ENCODE measurements at regions of chr3 and their contacts with region 1.

Region 1: GRCh38 chr3:197942956-197943556 is 6.9 kb upstream of the RPL35A start:
- DNase-seq: peak; percentile 45
- H3K4me3 Mint-ChIP-seq: no peak overlapping the region
- H3K27ac Mint-ChIP-seq: no peak overlapping the region
- H3K4me1 Mint-ChIP-seq: no peaks in the 10 kb centered on the region
- H3K27me3 Mint-ChIP-seq: no peaks in the 10 kb centered on the region
- CTCF ChIP-seq: peak; percentile 59

Region 2: DNA sequence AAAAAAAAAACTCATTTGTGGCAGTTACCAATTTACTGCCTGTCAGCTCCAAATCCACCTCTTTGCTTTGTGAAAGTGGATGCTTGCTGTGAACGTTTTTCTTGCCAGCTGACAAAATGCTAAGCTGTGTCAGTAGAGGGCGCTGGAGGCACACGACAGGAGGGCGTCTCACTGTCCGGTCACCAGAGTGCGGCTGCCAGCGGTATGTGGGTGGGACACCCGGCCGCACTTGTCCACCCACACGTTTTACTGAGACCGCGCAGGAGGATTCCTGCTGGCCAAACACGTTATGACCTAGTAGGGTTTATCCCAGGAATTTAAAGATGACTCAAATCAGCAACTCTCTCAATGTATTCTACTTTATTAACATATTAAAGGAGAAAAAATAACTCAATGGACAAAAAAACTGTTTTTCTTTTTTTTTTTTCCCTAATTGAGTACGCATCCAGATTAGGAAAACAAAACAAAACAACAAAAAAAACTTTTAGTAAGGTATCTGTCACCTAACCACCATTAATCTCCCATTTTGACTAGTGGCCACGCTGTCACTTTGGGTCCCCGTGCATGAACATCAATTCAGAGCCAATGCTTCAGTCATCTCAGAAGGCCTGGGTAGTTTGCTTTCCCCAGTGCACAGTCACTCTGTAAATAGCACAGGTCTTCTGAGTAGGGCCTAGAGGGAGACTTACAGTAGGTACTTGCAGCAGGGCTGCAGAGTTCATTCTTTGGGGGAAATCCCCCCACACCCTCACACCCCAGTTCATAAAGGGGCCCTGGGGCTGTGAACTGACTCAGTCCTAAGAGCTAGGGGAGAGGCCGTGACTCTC is 36.8 kb before region 1 on chr3:
- CTCF ChIA-PET with region 1: interaction called, 31 read pairs
- POLR2A ChIA-PET with region 1: no interaction called
- intact Hi-C with region 1: loop called (anchors 1 kb)
- DNase-seq: peak; percentile 88
- H3K4me3 Mint-ChIP-seq: no peak overlapping the region
- H3K27ac Mint-ChIP-seq: peak overlapping the region; percentile 53
- H3K4me1 Mint-ChIP-seq: no peaks in the 10 kb centered on the region
- H3K27me3 Mint-ChIP-seq: no peaks in the 10 kb centered on the region
- CTCF ChIP-seq: peak; percentile 89

Region 3: GRCh38 chr3:197912770-197913476 is 30.1 kb before region 1 on chr3:
- CTCF ChIA-PET with region 1: interaction called, 10 read pairs
- POLR2A ChIA-PET with region 1: no interaction called
- intact Hi-C with region 1: no loop called
- DNase-seq: no peak
- H3K4me3 Mint-ChIP-seq: no peak overlapping the region
- H3K27ac Mint-ChIP-seq: no peak overlapping the region
- H3K4me1 Mint-ChIP-seq: no peaks in the 10 kb centered on the region
- H3K27me3 Mint-ChIP-seq: no peaks in the 10 kb centered on the region
- CTCF ChIP-seq: no peak

Region 4: DNA sequence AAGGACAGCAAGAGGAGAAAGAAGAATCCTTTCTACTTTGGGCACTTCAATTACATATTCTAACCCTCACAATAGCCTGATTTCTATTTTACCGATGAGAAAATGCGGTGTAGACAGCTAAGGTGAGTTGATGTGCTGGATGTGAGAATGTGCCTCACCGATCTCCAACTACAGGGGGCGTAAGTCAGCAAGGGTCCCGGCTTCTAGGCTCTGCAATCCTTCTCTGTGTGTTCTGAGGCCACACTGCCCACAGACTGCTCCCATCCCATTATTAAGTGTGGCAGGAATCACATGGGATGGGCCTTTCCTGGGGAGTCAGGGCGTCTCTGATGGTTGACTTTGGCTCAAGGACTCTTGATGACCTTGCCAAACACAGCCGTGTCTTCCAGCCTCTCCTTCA is 16.6 kb before region 1 on chr3:
- CTCF ChIA-PET with region 1: interaction called, 10 read pairs
- POLR2A ChIA-PET with region 1: no interaction called
- intact Hi-C with region 1: no loop called
- DNase-seq: no peak
- H3K4me3 Mint-ChIP-seq: no peak overlapping the region
- H3K27ac Mint-ChIP-seq: no peak overlapping the region
- H3K4me1 Mint-ChIP-seq: no peaks in the 10 kb centered on the region
- H3K27me3 Mint-ChIP-seq: no peaks in the 10 kb centered on the region
- CTCF ChIP-seq: no peak

Measured in MCF 10A (cell line).